ENCODE measurements at regions of chr5 and their contacts with region 1.

Region 1: GRCh38 chr5:57277085-57277484 is 103.2 kb downstream of the GPBP1 start:
- DNase-seq: peak; percentile 36
- H3K4me3 ChIP-seq: no peak overlapping the region
- H3K27ac ChIP-seq: no peak overlapping the region
- H3K4me1 ChIP-seq: no peaks in the 10 kb centered on the region
- CTCF ChIP-seq: peak; percentile 77

Region 2: DNA sequence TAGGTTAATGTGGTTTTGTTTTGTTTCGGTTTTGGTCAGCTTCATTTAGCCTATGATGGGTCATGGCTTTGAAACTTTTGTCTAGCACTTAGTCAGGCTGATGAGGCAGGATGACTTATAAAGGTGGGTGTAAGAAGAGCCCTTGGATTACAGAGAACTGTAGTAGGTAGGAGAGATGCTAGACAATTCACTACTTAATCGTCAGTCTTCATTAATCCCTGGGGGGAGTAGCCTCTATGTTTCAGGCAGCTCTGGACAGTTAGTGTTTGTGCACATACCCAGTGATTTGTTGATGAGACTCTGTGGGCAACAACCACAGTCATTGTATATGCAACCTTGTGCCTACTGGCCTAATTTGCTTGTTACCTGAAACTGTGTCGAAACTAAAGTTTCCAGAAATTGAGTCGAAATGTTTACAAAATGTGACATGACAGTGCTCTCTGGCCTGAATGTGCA is 1856.0 kb before region 1 on chr5:
- CTCF ChIA-PET with region 1: no interaction called
- POLR2A ChIA-PET with region 1: no interaction called
- intact Hi-C with region 1: loop called (anchors 5 kb)
- DNase-seq: no peak
- H3K4me3 ChIP-seq: no peak overlapping the region
- H3K27ac ChIP-seq: no peak overlapping the region
- H3K4me1 ChIP-seq: no peaks in the 10 kb centered on the region
- CTCF ChIP-seq: no peak

Region 3: DNA sequence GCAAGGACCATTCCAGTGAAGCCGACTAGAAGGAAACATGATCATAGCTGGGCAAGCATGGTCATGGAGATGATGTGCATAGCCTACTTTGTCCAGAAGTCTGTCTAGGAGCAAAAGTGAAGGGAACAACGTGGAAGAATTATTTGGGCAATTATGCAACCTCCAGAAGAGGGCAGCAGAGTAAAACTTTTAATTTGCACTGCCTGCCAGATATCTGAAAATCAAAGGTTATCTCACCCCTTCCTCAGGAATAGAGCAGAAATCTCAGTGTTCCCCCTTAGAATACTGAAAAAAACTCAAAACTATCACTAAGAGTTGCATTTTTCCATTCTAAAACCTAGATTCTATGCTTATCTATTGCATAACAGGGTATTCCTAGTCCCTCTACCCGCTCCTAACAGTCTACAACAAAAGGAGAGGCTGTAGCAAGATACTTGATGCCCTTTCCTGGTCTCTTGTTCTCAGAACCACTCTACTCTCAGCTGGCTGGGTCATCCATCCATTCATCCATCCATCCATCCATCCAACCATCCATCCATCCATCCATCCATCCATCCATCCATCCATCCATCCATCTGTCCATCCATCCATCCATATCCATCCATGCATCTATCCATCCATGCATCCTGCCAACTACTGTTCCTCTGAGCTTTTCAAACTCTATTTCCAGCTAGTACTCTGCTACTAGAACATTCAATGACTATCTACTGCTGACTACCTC is 376.1 kb before region 1 on chr5:
- CTCF ChIA-PET with region 1: no interaction called
- POLR2A ChIA-PET with region 1: interaction called, 3 read pairs
- intact Hi-C with region 1: loop called (anchors 1 kb)
- DNase-seq: peak; percentile 65
- H3K4me3 ChIP-seq: no peak overlapping the region
- H3K27ac ChIP-seq: no peak overlapping the region
- H3K4me1 ChIP-seq: no peaks in the 10 kb centered on the region
- CTCF ChIP-seq: peak; percentile 88

Region 4: DNA sequence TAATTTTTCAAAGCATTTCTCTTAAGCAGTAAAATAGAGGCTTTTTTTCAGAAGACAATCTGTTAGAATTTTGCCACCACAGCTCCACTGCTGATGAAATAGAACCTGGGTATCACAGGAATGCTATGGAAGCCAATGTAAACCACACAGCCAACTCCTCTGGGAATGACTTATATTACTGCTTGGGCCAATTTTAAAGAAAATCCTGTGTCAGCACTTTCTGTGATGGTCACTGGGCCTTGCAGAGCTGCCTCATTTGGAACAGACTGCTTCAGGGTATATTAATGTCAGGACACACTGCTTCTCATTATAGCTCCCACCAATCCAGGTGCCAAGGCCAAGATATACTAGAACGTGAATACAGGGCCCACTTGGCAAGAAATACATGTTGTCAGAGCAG is 349.6 kb after region 1 on chr5:
- CTCF ChIA-PET with region 1: no interaction called
- POLR2A ChIA-PET with region 1: no interaction called
- intact Hi-C with region 1: no loop called
- DNase-seq: no peak
- H3K4me3 ChIP-seq: no peak overlapping the region
- H3K27ac ChIP-seq: no peak overlapping the region
- H3K4me1 ChIP-seq: no peaks in the 10 kb centered on the region
- CTCF ChIP-seq: no peak